AG04450 (cell line): ENCODE measurements at regions of chr2 and their contacts with region 1.

Region 1: GRCh38 chr2:47402805-47403608 is at the start of gene MSH2:
- DNase-seq: peak; percentile 73
- H3K4me3 ChIP-seq: peak within 1 kb of the TSS; percentile 80
- H3K27ac ChIP-seq: peak within 1 kb of the TSS; percentile 65
- H3K27me3 ChIP-seq: no peaks in the 10 kb centered on the region
- CTCF ChIP-seq: no peak
- polyA plus RNA-seq, gene MSH2: 12.6 and 18.4 TPM in 2 replicates

Region 2: GRCh38 chr2:45494269-45494977 is 1908.6 kb before region 1 on chr2:
- CTCF ChIA-PET with region 1: no interaction called
- POLR2A ChIA-PET with region 1: no interaction called
- DNase-seq: peak; percentile 41
- H3K4me3 ChIP-seq: no peak overlapping the region
- H3K27ac ChIP-seq: no peak overlapping the region
- H3K27me3 ChIP-seq: no peaks in the 10 kb centered on the region
- CTCF ChIP-seq: peak; percentile 81

Region 3: DNA sequence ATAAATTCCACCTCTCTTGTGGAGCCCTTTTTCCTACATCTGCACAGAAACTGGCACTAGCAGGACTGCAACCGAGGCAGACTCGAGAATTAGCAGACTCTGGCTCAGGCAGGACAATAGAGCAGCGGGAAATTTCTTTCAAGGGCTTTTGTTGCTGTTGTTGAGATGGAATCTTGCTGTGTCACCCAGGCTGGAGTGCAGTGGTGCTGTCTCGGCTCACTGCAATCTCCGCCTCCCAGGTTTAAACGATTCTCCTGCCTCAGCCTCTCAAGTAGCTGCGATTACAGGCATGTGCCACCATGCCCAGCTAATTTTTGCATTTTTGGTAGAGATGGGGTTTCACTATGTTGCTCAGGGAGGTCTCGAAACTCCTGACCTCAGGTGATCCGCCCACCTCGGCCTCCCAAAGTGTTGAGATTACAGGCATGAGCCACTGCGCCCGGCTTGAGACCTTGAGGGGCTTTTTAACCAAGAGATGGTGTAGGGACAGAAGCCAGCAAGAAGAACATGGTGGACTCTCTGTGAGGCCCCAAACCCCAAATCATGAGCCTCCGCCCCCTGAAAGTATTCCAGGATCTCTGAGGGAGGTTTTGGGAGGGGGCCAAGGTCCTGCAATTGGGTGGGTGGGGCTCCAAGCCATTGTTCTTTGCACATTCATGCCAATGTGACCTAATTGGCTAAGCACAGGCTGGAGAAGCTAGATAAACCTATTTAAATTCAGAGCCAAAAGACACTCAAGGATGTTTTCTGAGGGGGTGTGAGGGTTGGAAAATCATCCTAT is 68.5 kb before region 1 on chr2:
- CTCF ChIA-PET with region 1: interaction called, 13 read pairs
- POLR2A ChIA-PET with region 1: no interaction called
- DNase-seq: no peak
- H3K4me3 ChIP-seq: no peak overlapping the region
- H3K27ac ChIP-seq: no peak overlapping the region
- H3K27me3 ChIP-seq: no peaks in the 10 kb centered on the region
- CTCF ChIP-seq: no peak

Region 4: DNA sequence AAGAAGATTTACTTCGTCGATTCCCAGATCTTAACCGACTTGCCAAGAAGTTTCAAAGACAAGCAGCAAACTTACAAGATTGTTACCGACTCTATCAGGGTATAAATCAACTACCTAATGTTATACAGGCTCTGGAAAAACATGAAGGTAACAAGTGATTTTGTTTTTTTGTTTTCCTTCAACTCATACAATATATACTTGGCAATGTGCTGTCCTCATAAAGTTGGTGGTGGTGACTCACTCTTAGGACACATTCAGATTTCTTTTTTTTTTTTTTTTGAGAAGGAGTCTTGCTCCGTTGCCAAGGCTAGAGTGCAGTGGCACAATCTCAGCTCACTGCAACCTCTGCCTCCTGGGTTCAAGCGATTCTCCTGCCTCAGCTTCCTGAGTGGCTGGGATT is 26.8 kb after region 1 on chr2:
- CTCF ChIA-PET with region 1: no interaction called
- POLR2A ChIA-PET with region 1: no interaction called
- DNase-seq: no peak
- H3K4me3 ChIP-seq: no peak overlapping the region
- H3K27ac ChIP-seq: no peak overlapping the region
- H3K27me3 ChIP-seq: no peaks in the 10 kb centered on the region
- CTCF ChIP-seq: no peak